ENCODE measurements at regions of chr6 and their contacts with region 1.

Region 1: GRCh38 chr6:99568103-99568933 is at the start of gene CCNC:
- H3K4me3 ChIP-seq: peak within 1 kb of the TSS; percentile 64
- H3K27ac ChIP-seq: peak within 1 kb of the TSS; percentile 83
- H3K4me1 ChIP-seq: peaks cover 5% of the 10 kb centered on the region; the same call in 1 of the 2 replicates
- CTCF ChIP-seq: no peak

Region 2: GRCh38 chr6:99514089-99514488 is 54.2 kb before region 1 on chr6:
- CTCF ChIA-PET with region 1: interaction called, 3 read pairs
- POLR2A ChIA-PET with region 1: interaction called, 19 read pairs
- H3K4me3 ChIP-seq: peak overlapping the region; percentile 94
- H3K27ac ChIP-seq: no peak overlapping the region
- H3K4me1 ChIP-seq: peaks cover 14% of the 10 kb centered on the region; the same call in 1 of the 2 replicates
- CTCF ChIP-seq: no peak

Region 3: DNA sequence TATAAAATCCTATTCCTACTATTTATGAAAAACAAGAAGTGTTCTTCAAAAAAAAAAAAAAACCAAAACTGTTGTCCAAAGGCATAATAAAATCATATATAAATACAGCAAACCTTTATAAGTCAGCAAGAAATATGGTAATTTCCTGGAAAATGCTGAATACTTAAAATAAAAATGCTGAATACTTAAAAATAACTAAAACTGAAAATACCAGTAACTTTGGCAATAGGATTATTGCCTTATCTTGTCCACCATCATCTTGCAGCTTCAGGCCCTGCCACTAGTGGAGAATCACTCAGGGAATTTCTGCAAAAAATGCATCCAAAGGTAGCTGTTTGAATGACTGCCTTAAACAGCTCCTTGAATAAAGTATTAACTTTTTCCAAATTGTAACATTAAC is 24.4 kb before region 1 on chr6:
- CTCF ChIA-PET with region 1: interaction called, 3 read pairs
- POLR2A ChIA-PET with region 1: interaction called, 22 read pairs
- H3K4me3 ChIP-seq: no peak overlapping the region
- H3K27ac ChIP-seq: no peak overlapping the region
- H3K4me1 ChIP-seq: no peaks in the 10 kb centered on the region
- CTCF ChIP-seq: no peak

Region 4: DNA sequence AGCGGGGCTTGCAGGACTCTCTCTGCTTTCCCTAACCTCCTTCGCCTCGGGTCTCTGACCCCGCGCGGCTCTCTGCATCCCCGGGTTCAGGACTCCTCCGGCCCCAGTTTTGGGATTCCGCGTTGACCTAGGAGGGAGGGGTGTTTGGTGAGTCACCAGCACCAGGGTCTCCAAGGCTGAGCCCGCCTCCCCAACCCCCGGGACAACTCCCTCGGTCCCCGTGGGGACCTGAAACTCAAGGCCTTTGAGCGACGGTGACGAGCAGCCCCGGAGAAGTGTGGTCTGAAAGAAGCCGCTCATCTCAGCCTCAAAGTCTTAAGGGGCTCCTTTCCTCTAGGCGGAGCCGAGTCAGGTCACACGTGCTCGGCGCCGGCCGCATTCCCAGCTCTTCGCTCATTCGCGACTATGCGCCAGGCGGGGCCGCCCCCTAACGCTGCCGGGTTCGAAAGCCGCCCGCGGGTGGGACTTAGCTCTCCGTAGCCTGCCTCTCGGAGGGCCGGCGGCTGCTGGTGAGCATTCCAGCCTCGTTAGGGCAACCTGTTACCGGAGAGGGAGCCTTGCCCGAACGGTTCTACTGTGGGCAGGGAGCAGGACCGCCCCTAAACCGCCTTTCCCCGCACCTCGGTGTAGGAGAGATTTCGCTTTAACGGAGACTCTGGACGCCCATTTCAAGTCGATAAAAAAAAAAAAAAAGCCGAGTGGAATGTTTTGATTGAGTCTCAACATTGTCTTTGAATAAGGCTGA is 35.3 kb after region 1 on chr6:
- CTCF ChIA-PET with region 1: no interaction called
- POLR2A ChIA-PET with region 1: interaction called, 11 read pairs
- H3K4me3 ChIP-seq: peak overlapping the region; percentile 16
- H3K27ac ChIP-seq: no peak overlapping the region
- H3K4me1 ChIP-seq: no peaks in the 10 kb centered on the region
- CTCF ChIP-seq: no peak

Region 5: GRCh38 chr6:99618649-99619408 is 50.5 kb after region 1 on chr6:
- CTCF ChIA-PET with region 1: interaction called, 3 read pairs
- POLR2A ChIA-PET with region 1: interaction called, 30 read pairs
- H3K4me3 ChIP-seq: peak overlapping the region; percentile 36
- H3K27ac ChIP-seq: no peak overlapping the region
- H3K4me1 ChIP-seq: 0 out of 2 replicates have a peak, but pooled peaks cover 10% of the 10 kb centered on the region
- CTCF ChIP-seq: no peak